ENCODE measurements at regions of chr15 and their contacts with region 1.

Region 1: GRCh38 chr15:84734794-84735479 is 13.5 kb upstream of the ZNF592 start:
- DNase-seq: peak; percentile 94
- ATAC-seq: peak; percentile 82
- H3K4me3 ChIP-seq: peak overlapping the region; percentile 58
- H3K27ac ChIP-seq: peak overlapping the region; percentile 85
- H3K4me1 ChIP-seq: peaks cover 28% of the 10 kb centered on the region
- H3K27me3 ChIP-seq: no peaks in the 10 kb centered on the region
- CTCF ChIP-seq: no peak
- EP300 ChIP-seq: no peak
- POLR2A ChIP-seq: 0 out of 2 replicates have a peak, but pooled peaks have one; percentile 21
- RAD21 ChIP-seq: no peak

Region 2: DNA sequence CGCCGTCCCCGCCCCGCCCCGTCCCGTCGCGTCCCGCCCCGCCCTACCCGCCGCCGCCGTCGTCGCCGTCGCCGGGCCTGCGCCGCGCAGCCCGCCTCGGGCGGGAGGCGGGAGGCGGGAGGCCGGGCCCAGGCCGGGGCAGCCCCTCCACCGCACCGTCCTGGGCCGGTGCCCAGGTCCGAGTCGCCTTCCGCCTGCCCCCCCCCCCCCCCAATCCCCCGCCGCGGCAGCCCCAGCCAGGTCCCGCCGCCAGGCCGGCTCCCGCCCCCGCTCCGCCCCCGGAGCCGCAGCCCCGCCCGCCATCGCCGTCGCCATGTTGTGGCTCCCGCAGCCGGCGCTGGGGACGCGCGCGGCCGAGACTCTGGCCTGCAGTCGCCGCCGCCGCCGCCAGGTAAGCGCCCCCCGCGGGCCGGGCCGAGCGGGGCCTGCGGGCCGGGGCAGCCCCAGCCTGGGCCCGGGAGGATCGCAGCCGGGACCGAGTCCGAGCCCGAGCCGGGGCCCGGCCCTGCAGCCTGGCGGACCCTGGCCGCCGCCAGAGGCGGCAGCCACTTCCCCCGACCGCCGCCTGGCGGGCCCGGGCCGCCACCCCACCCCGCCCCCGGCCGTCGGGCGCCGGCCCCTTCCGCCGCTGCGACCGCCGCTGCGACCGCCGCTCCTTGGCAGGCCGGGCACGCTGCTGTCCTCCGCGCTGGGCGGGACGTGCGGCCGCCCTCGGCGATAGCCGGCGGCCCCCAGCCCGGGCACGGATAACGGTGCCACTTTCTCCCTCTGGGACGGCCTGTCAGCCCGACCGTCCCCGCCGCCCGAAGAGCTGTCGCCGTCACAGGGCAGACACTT is 13.6 kb after region 1 on chr15 and contains the start of gene ZNF592:
- CTCF ChIA-PET with region 1: interaction called, 10 read pairs
- POLR2A ChIA-PET with region 1: interaction called, 18 read pairs
- RAD21 ChIA-PET with region 1: interaction called, 31 read pairs
- SMC1A ChIA-PET with region 1: interaction called, 34 read pairs
- in situ Hi-C with region 1: no loop called
- intact Hi-C with region 1: loop called (anchors 1 kb)
- DNase-seq: no peak
- ATAC-seq: peak; percentile 51
- H3K4me3 ChIP-seq: peak within 1 kb of the TSS; percentile 84
- H3K27ac ChIP-seq: peak within 1 kb of the TSS; percentile 90
- H3K4me1 ChIP-seq: peaks cover 15% of the 10 kb centered on the region
- H3K27me3 ChIP-seq: no peaks in the 10 kb centered on the region
- CTCF ChIP-seq: peak in 2 of 3 experiments; percentile 25; a peak in 3 of 6 replicates
- EP300 ChIP-seq: no peak
- POLR2A ChIP-seq: peak; percentile 50
- RAD21 ChIP-seq: no peak
- polyA plus RNA-seq, gene ZNF592: 0.95 to 1.3 TPM

Region 3: DNA sequence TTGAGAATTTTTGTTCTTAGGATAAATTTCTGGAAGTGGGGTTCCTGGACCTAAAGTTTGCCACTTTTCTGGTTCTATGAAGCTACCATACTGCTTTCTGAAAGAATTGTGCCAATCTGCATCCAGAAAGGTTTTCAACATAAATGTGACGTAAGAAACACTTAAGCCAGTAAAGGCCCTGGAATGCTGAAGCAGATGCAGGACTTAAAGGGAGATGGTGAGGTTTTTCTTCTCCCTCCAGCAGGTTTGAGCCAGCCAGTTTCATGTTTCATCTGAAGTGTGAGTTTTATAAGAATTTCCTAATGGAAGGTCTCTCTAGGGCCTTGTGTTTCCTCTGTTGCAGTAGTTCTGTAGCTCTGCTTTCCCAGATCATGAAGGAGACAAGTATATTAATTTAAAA is 46.6 kb after region 1 on chr15:
- CTCF ChIA-PET with region 1: no interaction called
- POLR2A ChIA-PET with region 1: no interaction called
- RAD21 ChIA-PET with region 1: no interaction called
- SMC1A ChIA-PET with region 1: no interaction called
- in situ Hi-C with region 1: no loop called
- intact Hi-C with region 1: no loop called
- DNase-seq: no peak
- ATAC-seq: no peak
- H3K4me3 ChIP-seq: no peak overlapping the region
- H3K27ac ChIP-seq: no peak overlapping the region
- H3K4me1 ChIP-seq: peaks cover 5% of the 10 kb centered on the region; the same call in 1 of the 2 replicates
- H3K27me3 ChIP-seq: no peaks in the 10 kb centered on the region
- CTCF ChIP-seq: no peak
- EP300 ChIP-seq: no peak
- POLR2A ChIP-seq: no peak
- RAD21 ChIP-seq: no peak